ENCODE measurements at regions of chr11 and their contacts with region 1.

Region 1: DNA sequence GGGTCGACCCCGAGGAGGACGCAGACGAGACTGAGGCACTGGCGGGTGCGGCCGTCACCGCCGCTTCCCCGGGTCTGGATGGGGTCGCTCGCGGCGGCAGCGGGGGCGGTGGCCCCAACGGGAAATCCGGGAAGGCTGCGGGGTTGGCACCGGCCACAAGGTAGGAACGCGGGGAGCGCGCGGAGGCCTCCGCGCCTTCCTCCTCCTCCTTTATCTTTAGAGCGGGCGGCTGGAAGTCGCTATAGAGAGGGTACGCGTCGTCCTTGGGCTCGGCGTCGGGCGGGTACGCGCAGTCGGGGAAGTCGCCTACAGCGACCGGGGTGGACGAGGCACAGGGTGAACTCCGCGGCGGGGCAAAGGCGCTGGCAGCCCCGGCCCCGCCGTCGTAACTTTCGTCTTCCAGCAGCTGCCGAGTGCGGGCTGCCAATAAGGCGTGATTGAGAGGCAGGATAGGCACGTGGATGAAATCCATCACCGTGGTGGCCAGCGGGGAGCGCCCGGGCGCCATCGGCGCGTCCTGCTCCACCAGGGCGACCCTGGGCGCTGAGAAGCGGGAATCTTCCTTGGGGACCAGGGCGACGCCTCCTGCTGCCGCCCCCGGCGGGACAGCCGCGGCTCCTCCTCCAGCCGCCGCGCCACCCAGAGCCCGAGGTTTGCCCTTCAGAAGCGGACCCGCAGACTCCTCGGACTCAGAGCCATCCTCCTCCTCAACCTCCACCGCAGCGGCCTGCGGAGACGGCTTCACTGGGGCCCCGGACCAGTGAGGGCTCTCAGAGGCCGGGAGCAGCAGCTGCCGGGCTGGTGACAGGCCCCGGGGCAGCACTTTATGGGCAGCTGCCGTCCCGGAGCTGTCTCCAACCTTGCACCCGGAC is 1.7 kb downstream of the PGR start:
- DNase-seq: peak; percentile 64
- ATAC-seq: peak; percentile 63

Region 2: GRCh38 chr11:101034076-101034475 is 93.9 kb before region 1 on chr11:
- intact Hi-C with region 1: loop called (anchors 10 kb)
- DNase-seq: peak; percentile 70
- ATAC-seq: peak; percentile 96

Region 3: GRCh38 chr11:101096036-101096704 is 31.8 kb before region 1 on chr11:
- intact Hi-C with region 1: loop called (anchors 2 kb)
- DNase-seq: peak; percentile 67
- ATAC-seq: peak; percentile 81

Region 4: DNA sequence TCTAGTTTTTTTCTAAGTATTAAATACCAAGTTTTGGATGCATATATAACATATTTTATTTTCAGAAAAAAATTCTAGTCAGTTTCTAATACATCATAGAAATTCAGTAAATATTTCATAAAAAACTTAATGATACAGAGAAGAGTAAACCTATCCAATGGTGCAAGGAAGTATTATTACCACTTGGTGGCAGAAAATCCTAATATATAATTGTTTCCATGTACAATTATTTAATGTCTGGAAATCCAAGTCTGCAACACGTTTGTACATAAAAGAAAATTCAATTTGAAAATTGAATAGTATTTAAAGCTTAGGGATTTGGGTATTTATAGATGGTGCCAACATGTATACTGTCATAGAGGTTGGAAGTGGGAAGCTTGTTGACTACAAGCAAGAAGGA is 328.9 kb after region 1 on chr11:
- intact Hi-C with region 1: no loop called
- DNase-seq: no peak
- ATAC-seq: no peak